ENCODE measurements at regions of chr4 and their contacts with region 1.

Region 1: DNA sequence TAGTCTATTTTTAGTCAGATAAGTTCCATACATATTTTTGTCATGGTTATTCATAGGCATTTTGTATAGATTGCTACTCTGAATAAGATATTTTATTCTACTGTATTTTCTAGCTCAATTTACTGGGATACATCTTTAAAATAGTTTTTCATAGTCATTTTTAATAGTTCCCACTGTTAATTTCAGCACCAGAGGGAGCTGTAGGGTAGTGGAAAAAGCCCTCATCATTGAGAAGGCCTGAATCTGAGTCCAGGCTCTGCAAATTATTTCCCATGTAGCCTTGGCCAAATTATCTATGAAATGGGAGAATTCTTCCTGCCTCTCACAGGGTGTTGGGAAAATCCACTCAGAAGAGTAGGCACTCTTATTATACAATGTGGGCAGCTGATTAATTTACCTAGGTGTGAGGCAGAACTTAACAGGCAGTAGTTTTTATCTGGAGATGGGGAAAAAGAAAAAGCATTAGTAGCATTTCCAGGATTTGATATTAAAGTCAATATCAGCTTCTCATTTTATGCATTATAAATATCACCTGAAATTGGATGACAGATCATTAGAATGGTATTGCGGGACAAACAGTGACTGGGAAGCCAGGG is 102.9 kb upstream of the PAQR3 start:
- DNase-seq: no peak
- ATAC-seq: peak; percentile 63

Region 2: GRCh38 chr4:78818530-78819079 is 223.6 kb before region 1 on chr4:
- intact Hi-C with region 1: no loop called
- DNase-seq: no peak
- ATAC-seq: no peak

Region 3: DNA sequence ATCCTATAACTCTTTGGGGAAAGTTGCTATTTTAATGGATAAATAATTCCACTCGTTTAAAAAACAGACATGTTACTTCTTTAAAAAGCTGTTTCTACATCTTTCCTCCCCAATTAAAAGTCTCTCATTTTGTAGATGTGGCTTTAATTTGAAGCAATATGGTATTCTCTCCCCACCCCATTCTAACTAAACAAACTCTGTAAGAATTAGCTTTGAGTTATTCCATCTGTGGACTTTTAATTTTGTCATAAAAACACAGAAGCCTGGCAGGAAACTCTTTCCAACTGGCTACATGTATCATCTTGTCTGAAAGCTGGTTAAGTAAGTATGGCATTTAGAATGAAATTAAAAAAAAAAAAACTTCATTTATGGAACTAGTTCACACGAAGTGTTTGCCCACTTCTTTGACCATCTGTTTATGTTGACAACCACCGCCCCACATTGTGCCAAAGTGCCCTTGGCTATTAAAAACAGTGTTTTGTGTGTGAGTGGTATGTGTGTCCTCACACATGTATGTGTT is 143.4 kb after region 1 on chr4:
- intact Hi-C with region 1: no loop called
- DNase-seq: no peak
- ATAC-seq: no peak

Region 4: GRCh38 chr4:79576429-79576753 is 534.2 kb after region 1 on chr4:
- intact Hi-C with region 1: loop called (anchors 5 kb)
- DNase-seq: no peak
- ATAC-seq: peak; percentile 56

Measured in Right ventricle myocardium inferior (tissue), 1 donor.